CD8-positive, alpha-beta T cell (primary cell): ENCODE measurements at regions of chr7 and their contacts with region 1.

Region 1: DNA sequence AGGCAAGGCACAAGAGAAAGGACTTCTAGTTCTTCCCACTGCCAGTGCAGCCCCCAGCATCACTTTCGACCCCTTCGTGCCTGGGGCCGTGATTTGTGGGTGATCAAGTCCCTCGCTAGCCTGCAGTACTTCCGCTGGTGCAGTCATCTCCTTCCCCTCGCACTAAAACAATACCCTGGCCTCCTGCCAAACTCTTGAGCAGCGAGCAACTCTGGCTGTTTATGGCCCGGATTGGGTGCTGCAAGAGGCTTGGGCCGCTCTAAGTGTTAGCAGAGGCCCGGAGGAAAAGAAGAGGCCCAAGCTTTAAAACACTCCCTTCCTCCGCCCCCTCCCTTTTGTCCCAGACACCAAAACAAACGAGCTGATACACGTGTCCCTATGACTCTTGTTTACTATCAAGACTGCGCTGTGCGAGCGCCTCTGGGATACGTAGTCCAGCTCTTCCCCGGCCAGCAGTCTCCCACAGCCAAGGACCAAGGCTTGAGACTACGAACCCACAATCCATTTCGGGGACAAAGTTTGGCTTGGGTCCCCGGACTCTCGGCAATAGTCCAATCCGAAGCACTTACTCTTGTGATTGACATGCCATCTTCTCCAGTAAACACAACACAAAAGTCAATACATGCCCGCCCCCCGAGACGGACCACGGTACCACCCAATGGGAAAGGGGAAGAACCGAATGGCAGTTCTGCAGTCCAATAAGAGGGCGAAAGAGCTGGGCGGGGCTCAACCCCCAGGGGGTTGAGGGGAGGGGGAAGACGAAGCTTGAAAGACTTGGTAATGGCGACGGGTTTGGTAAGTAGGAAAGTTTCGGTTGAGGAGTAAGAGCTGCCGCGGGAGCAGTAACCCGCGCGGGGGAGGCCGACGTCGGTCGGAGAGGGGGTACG is at the start of gene HBP1:
- DNase-seq: peak; percentile 95 to 100 (median 98)
- ATAC-seq: peak; percentile 77
- H3K4me3 ChIP-seq: peak within 1 kb of the TSS; percentile 85 to 93
- H3K4me3 Mint-ChIP-seq: peak within 1 kb of the TSS; percentile 94
- H3K27ac ChIP-seq: peak within 1 kb of the TSS; percentile 96 to 98
- H3K27ac Mint-ChIP-seq: peak within 1 kb of the TSS; percentile 99
- H3K4me1 ChIP-seq: peaks cover 36% of the 10 kb centered on the region
- H3K4me1 Mint-ChIP-seq: peaks cover 35% of the 10 kb centered on the region
- H3K27me3 ChIP-seq: no peaks in the 10 kb centered on the region
- H3K27me3 Mint-ChIP-seq: no peaks in the 10 kb centered on the region
- CTCF ChIP-seq: no peak
- total RNA-seq, gene HBP1: 233 to 251 TPM

Region 2: GRCh38 chr7:105531792-105532671 is 1636.4 kb before region 1 on chr7 and contains the start of gene RINT1:
- CTCF ChIA-PET with region 1: no interaction called
- POLR2A ChIA-PET with region 1: interaction called, 8 read pairs
- intact Hi-C with region 1: loop called in 1 of 2 experiments (anchors 5 kb)
- DNase-seq: peak; percentile 84 to 94 (median 87)
- ATAC-seq: peak; percentile 91
- H3K4me3 ChIP-seq: peak within 1 kb of the TSS; percentile 90 to 93
- H3K4me3 Mint-ChIP-seq: peak within 1 kb of the TSS; percentile 94
- H3K27ac ChIP-seq: peak within 1 kb of the TSS; percentile 75 to 85
- H3K27ac Mint-ChIP-seq: peak within 1 kb of the TSS; percentile 96
- H3K4me1 ChIP-seq: peaks cover 15% of the 10 kb centered on the region
- H3K4me1 Mint-ChIP-seq: peaks cover 43% of the 10 kb centered on the region
- H3K27me3 ChIP-seq: no peaks in the 10 kb centered on the region
- H3K27me3 Mint-ChIP-seq: no peaks in the 10 kb centered on the region
- CTCF ChIP-seq: peak; percentile 57
- total RNA-seq, gene RINT1: 46.3 to 50.8 TPM

Region 3: GRCh38 chr7:106493041-106493731 is 675.3 kb before region 1 on chr7:
- CTCF ChIA-PET with region 1: no interaction called
- POLR2A ChIA-PET with region 1: no interaction called
- intact Hi-C with region 1: no loop called
- DNase-seq: no peak
- ATAC-seq: no peak
- H3K4me3 ChIP-seq: no peak overlapping the region
- H3K4me3 Mint-ChIP-seq: no peak overlapping the region
- H3K27ac ChIP-seq: no peak overlapping the region
- H3K27ac Mint-ChIP-seq: no peak overlapping the region
- H3K4me1 ChIP-seq: no peaks in the 10 kb centered on the region
- H3K4me1 Mint-ChIP-seq: no peaks in the 10 kb centered on the region
- H3K27me3 ChIP-seq: peaks cover 0 to 3% of the 10 kb centered on the region in 2 experiments
- H3K27me3 Mint-ChIP-seq: peaks cover 17% of the 10 kb centered on the region
- CTCF ChIP-seq: no peak

Region 4: GRCh38 chr7:106659963-106660861 is 508.3 kb before region 1 on chr7:
- CTCF ChIA-PET with region 1: no interaction called
- POLR2A ChIA-PET with region 1: interaction called, 8 read pairs
- intact Hi-C with region 1: loop called (anchors 2 to 5 kb)
- DNase-seq: peak; percentile 59 to 88 (median 75)
- ATAC-seq: peak; percentile 46
- H3K4me3 ChIP-seq: peak overlapping the region; percentile 76 to 87
- H3K4me3 Mint-ChIP-seq: peak overlapping the region; percentile 96
- H3K27ac ChIP-seq: peak overlapping the region; percentile 65 to 70
- H3K27ac Mint-ChIP-seq: peak overlapping the region; percentile 89
- H3K4me1 ChIP-seq: peaks cover 15% of the 10 kb centered on the region
- H3K4me1 Mint-ChIP-seq: peaks cover 37% of the 10 kb centered on the region
- H3K27me3 ChIP-seq: no peaks in the 10 kb centered on the region
- H3K27me3 Mint-ChIP-seq: no peaks in the 10 kb centered on the region
- CTCF ChIP-seq: peak; percentile 82

Region 5: GRCh38 chr7:106891547-106892410 is 276.7 kb before region 1 on chr7:
- CTCF ChIA-PET with region 1: no interaction called
- POLR2A ChIA-PET with region 1: no interaction called
- intact Hi-C with region 1: no loop called
- DNase-seq: no peak
- ATAC-seq: no peak
- H3K4me3 ChIP-seq: no peak overlapping the region
- H3K4me3 Mint-ChIP-seq: no peak overlapping the region
- H3K27ac ChIP-seq: no peak overlapping the region
- H3K27ac Mint-ChIP-seq: peak overlapping the region; percentile 8
- H3K4me1 ChIP-seq: no peaks in the 10 kb centered on the region
- H3K4me1 Mint-ChIP-seq: peaks cover 35% of the 10 kb centered on the region
- H3K27me3 ChIP-seq: no peaks in the 10 kb centered on the region
- H3K27me3 Mint-ChIP-seq: no peaks in the 10 kb centered on the region
- CTCF ChIP-seq: no peak

Region 6: GRCh38 chr7:107044347-107045194 is 123.9 kb before region 1 on chr7 and contains the start of gene PRKAR2B:
- CTCF ChIA-PET with region 1: no interaction called
- POLR2A ChIA-PET with region 1: interaction called, 4 read pairs
- intact Hi-C with region 1: loop called in 1 of 2 experiments (anchors 1 kb)
- DNase-seq: peak; percentile 55 to 91 (median 80)
- ATAC-seq: peak; percentile 93
- H3K4me3 ChIP-seq: peak within 1 kb of the TSS; percentile 50 to 58
- H3K4me3 Mint-ChIP-seq: peak within 1 kb of the TSS; percentile 86
- H3K27ac ChIP-seq: no peak within 1 kb of the TSS
- H3K27ac Mint-ChIP-seq: no peak within 1 kb of the TSS
- H3K4me1 ChIP-seq: peaks cover 13% of the 10 kb centered on the region
- H3K4me1 Mint-ChIP-seq: peaks cover 10% of the 10 kb centered on the region
- H3K27me3 ChIP-seq: peaks cover 7% of the 10 kb centered on the region in 2 experiments
- H3K27me3 Mint-ChIP-seq: peaks cover 7% of the 10 kb centered on the region
- CTCF ChIP-seq: no peak
- total RNA-seq, gene PRKAR2B: 0.33 to 0.60 TPM

Region 7: DNA sequence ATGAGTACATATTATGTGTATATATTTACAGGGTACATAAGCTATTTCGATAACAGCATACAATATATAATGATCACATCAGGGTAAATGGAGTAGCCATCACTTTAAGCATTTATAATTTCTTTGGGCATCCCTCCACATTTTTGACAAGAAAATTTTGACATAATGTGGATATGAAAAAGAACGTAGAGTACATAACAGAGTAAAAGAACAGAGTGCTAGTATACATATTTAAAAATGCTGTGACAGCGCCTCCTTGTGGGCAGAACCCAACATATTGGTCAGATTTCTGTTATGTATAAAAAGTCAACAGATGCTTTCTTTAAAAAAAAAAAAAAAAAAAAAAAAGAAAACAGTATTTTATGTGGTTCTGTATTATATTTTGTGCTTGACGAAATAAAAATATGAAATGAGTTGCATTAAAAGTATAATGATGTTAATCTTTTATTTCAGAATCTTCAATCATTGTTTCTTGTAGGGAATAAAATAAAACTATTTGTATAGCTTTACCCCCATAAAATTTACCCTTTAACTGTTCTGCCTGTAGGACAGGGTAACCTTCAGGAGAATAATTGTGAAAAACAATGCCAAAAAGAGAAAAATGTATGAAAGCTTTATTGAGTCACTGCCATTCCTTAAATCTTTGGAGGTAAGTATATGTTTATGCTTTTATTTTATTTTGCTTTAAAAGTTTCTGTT is 18.0 kb before region 1 on chr7:
- CTCF ChIA-PET with region 1: interaction called, 14 read pairs
- POLR2A ChIA-PET with region 1: interaction called, 30 read pairs
- intact Hi-C with region 1: loop called (anchors 1 to 2 kb)
- DNase-seq: peak; percentile 64 to 86 (median 81)
- ATAC-seq: peak; percentile 88
- H3K4me3 ChIP-seq: no peak overlapping the region
- H3K4me3 Mint-ChIP-seq: no peak overlapping the region
- H3K27ac ChIP-seq: no peak overlapping the region
- H3K27ac Mint-ChIP-seq: no peak overlapping the region
- H3K4me1 ChIP-seq: no peaks in the 10 kb centered on the region
- H3K4me1 Mint-ChIP-seq: peaks cover 6% of the 10 kb centered on the region
- H3K27me3 ChIP-seq: no peaks in the 10 kb centered on the region
- H3K27me3 Mint-ChIP-seq: no peaks in the 10 kb centered on the region
- CTCF ChIP-seq: peak; percentile 95

Region 8: DNA sequence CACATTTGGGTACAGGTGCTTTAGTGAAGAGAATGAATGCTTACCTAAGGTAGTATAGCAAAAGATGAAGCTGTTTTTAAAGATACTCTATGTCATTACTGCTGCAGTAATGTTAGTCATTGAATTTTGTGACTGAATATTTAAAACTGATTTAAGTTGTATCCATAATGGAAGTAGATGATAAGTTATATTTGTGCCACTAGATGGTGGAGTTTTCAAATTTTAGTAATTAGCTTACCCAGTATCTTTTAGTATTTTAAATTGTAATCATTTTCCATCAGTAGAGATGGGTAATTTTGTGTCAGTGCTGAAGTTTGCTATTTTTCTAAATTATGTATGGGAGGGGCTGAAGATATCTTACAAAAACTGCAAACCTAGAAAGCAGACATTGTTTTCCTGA is 25.6 kb after region 1 on chr7:
- CTCF ChIA-PET with region 1: interaction called, 4 read pairs
- POLR2A ChIA-PET with region 1: interaction called, 17 read pairs
- intact Hi-C with region 1: no loop called
- DNase-seq: no peak
- ATAC-seq: no peak
- H3K4me3 ChIP-seq: no peak overlapping the region
- H3K4me3 Mint-ChIP-seq: no peak overlapping the region
- H3K27ac ChIP-seq: no peak overlapping the region
- H3K27ac Mint-ChIP-seq: peak overlapping the region; percentile 33
- H3K4me1 ChIP-seq: no peaks in the 10 kb centered on the region
- H3K4me1 Mint-ChIP-seq: peaks cover 6% of the 10 kb centered on the region
- H3K27me3 ChIP-seq: no peaks in the 10 kb centered on the region
- H3K27me3 Mint-ChIP-seq: no peaks in the 10 kb centered on the region
- CTCF ChIP-seq: no peak

Region 9: DNA sequence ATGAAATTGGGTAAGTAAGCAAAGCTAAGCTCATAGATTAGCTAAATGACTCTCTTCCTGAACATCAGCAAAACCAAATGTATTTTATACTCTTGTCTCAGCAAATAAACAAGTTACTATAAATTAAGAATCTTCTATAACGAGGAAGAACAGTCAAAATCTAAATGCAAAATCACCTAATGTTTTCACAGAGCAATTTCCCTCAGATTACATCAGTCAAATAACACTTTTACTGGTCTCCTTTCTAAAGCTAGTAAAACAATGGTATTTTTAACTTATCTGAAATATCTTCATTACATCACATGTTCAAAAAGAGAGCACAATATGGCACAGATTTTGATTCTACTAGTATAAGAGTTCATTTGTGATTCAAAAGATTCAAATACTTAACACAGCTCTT is 284.9 kb after region 1 on chr7:
- CTCF ChIA-PET with region 1: no interaction called
- POLR2A ChIA-PET with region 1: no interaction called
- intact Hi-C with region 1: no loop called
- DNase-seq: no peak
- ATAC-seq: no peak
- H3K4me3 ChIP-seq: no peak overlapping the region
- H3K4me3 Mint-ChIP-seq: no peak overlapping the region
- H3K27ac ChIP-seq: no peak overlapping the region
- H3K27ac Mint-ChIP-seq: no peak overlapping the region
- H3K4me1 ChIP-seq: no peaks in the 10 kb centered on the region
- H3K4me1 Mint-ChIP-seq: peaks cover 24% of the 10 kb centered on the region
- H3K27me3 ChIP-seq: no peaks in the 10 kb centered on the region
- H3K27me3 Mint-ChIP-seq: no peaks in the 10 kb centered on the region
- CTCF ChIP-seq: no peak

Region 10: GRCh38 chr7:107890962-107891635 is 722.6 kb after region 1 on chr7 and contains the start of gene DLD:
- CTCF ChIA-PET with region 1: interaction called, 3 read pairs
- POLR2A ChIA-PET with region 1: no interaction called
- intact Hi-C with region 1: loop called (anchors 1 to 5 kb)
- DNase-seq: peak; percentile 86 to 97 (median 93)
- ATAC-seq: peak; percentile 97
- H3K4me3 ChIP-seq: peak within 1 kb of the TSS; percentile 79 to 86
- H3K4me3 Mint-ChIP-seq: peak within 1 kb of the TSS; percentile 98
- H3K27ac ChIP-seq: peak within 1 kb of the TSS; percentile 88 to 94
- H3K27ac Mint-ChIP-seq: peak within 1 kb of the TSS; percentile 98
- H3K4me1 ChIP-seq: peaks cover 48% of the 10 kb centered on the region
- H3K4me1 Mint-ChIP-seq: peaks cover 48% of the 10 kb centered on the region
- H3K27me3 ChIP-seq: no peaks in the 10 kb centered on the region
- H3K27me3 Mint-ChIP-seq: no peaks in the 10 kb centered on the region
- CTCF ChIP-seq: no peak
- total RNA-seq, gene DLD: 83.5 to 85.9 TPM

Region 11: GRCh38 chr7:108515013-108515412 is 1346.5 kb after region 1 on chr7:
- CTCF ChIA-PET with region 1: no interaction called
- POLR2A ChIA-PET with region 1: no interaction called
- intact Hi-C with region 1: no loop called
- DNase-seq: no peak
- ATAC-seq: no peak
- H3K4me3 ChIP-seq: no peak overlapping the region
- H3K4me3 Mint-ChIP-seq: no peak overlapping the region
- H3K27ac ChIP-seq: no peak overlapping the region
- H3K27ac Mint-ChIP-seq: no peak overlapping the region
- H3K4me1 ChIP-seq: no peaks in the 10 kb centered on the region
- H3K4me1 Mint-ChIP-seq: peaks cover 30% of the 10 kb centered on the region
- H3K27me3 ChIP-seq: no peaks in the 10 kb centered on the region
- H3K27me3 Mint-ChIP-seq: no peaks in the 10 kb centered on the region
- CTCF ChIP-seq: no peak